Posterior vena cava (tissue), 2 donors: ENCODE measurements at regions of chr3 and their contacts with region 1.

Region 1: DNA sequence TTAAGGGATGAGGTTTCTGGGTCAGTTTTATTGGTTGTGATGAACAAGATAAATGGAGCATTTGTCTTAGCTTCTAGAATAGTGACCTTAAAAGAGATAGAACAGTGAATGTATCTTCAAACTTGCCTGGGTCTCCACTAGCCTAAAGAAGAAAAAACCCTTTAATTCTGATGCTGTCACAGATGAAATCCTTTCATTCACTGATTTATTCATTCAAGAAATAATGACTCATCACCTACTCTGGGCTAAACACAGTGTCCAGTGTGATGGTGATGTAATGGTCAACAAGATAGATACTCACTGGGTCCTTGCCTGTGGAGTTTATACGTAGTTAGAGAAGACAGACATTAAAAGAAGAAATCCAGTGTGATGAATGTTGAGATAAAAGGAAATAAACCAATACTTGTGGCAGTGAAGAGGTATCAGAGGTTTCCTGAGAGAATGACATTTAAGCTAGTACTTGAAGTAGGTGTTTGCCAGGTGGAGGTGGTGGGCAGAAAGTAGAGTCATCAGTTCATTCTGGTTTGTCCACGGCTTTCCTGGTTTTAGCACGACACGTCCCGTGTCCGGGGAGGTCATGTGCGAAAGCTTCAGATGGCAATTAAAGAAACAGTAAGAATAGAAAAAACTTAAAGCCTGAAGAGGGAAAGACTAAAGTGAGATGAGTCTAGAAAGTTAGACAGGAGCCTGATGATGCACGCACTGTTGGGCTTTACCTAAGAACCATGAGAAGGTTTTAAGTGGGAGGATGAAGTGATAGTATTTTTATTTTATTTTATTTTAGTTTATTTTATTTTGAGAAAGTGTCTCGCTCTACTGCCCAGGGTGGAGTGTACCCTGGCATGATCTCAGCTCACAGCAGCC is 18.5 kb downstream of the PAK2 start:
- DNase-seq: no peak

Region 2: GRCh38 chr3:196774191-196774820 is 16.2 kb after region 1 on chr3:
- intact Hi-C with region 1: loop called in 1 of 2 experiments (anchors 1 kb)
- DNase-seq: no peak

Region 3: DNA sequence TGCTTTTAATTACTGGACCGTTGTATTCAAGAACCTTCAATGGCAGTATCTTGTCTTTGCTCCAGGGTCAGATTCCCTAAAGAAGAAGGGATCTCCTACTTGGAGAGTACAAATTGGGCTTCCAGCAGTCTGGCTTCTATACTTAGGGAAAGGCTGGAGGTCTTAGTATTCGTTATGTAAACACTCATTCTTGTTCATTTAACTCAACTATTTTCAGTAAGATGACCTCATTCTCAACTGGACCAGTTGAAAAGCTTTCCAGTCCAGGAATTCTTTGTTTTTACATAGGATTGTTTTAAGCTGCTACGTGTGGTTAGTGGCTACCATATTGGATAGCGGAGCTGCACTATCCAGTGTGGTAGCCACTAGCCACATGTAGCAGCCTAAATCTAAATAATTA is 114.2 kb after region 1 on chr3:
- intact Hi-C with region 1: no loop called
- DNase-seq: no peak

Region 4: GRCh38 chr3:198071602-198072285 is 1313.6 kb after region 1 on chr3:
- intact Hi-C with region 1: no loop called
- DNase-seq: no peak